Sigmoid colon (tissue), 7 donors: ENCODE measurements at regions of chr15 and their contacts with region 1.

Region 1: DNA sequence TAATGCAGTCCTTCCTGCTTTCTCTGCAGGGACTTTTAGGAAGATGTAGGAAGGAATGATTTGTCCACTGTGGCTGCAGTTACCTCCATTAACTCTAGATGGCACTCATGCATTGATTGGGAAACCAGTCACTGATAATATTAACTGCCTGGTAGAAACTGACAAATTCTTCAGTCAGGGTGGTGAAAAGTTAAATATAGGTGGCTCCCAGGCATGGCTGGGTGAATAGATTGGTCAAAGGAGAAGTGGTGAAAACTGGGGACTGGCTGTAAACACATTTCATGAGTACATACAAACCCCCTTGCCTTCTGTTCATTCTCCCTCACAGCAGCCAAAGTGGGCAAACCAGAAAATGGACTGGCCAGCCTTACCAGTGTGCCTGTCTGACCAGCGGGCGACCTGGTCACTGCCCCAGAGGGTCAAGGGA is 333.4 kb downstream of the THSD4 start:
- DNase-seq: no peak
- H3K4me3 ChIP-seq: no peak overlapping the region
- H3K27ac ChIP-seq: no peak overlapping the region
- H3K4me1 ChIP-seq: no peaks in the 10 kb centered on the region
- H3K27me3 ChIP-seq: no peaks in the 10 kb centered on the region
- CTCF ChIP-seq: peak; percentile 65 to 91 (median 86)
- EP300 ChIP-seq: no peak
- POLR2A ChIP-seq: no peak

Region 2: DNA sequence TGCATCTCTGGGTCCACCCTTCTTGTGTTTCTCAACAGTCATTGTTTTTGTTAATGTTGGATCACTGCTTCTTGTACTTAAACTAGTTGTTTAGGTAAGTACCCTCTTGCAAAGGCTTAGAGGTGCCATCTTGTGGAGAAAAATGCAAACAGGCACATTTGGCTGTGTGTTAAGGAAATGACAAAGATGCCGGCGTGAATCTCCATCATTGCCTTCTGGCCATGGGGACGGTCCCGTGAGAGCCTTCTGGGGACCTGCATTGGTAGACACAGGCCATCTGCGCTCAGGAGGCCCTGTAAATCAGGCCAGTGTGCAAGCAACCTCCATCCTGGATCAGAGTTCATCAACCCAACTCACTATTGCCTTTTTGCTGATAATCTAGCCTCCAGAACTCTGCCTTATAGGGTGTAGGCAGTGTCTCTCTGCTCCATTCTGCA is 203.1 kb after region 1 on chr15:
- intact Hi-C with region 1: loop called (anchors 5 kb)
- DNase-seq: no peak
- H3K4me3 ChIP-seq: no peak overlapping the region
- H3K27ac ChIP-seq: no peak overlapping the region
- H3K4me1 ChIP-seq: peaks cover 0 to 10% (median 0%) of the 10 kb centered on the region in 4 donors
- H3K27me3 ChIP-seq: no peaks in the 10 kb centered on the region
- CTCF ChIP-seq: peak in 2 of 4 experiments; percentile 24 to 35
- EP300 ChIP-seq: no peak
- POLR2A ChIP-seq: no peak

Region 3: DNA sequence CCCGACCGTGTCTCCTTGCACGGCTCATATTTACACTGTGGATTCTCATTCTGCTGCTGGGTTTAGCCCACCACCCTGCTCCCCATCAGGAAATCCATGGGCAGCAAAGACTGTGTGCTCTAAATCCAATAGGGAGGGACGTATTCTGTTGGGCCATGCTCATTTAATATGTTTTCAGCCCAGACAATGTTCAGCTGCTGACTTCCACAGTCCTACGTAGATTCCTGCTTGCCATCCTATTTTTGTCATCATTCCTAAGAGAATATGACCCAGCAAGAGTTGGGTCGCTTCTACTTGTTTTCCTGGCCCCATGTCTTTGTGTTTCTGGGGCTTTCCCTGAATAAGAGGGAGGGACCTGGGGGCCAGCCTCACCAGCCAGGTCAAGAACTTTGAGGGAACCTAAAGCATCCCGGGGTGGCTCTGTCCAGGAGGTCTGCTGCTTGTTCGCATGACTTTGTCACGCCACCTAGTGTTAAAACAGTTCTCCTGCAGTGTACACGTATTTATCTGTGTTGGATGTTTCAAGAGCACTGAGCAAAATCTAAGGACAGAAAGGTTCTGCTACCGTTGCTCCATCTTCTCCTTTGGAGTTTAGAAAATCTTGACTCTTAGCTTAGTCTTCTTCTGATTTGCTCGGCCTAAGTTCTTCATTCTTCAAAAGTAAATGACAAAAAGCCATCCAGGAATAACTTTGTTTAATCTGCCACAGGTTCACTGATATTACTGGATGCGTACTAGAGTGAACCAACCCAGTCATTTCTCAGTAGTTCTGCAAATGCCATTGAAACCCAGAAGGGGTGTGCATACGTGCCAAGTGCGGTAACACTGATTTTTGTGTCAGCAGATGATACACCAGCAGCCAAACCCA is 281.8 kb after region 1 on chr15:
- intact Hi-C with region 1: loop called (anchors 1 kb)
- DNase-seq: no peak
- H3K4me3 ChIP-seq: no peak overlapping the region
- H3K27ac ChIP-seq: no peak overlapping the region
- H3K4me1 ChIP-seq: peaks cover 0 to 4% (median 0%) of the 10 kb centered on the region in 4 donors
- H3K27me3 ChIP-seq: no peaks in the 10 kb centered on the region
- CTCF ChIP-seq: peak; percentile 15 to 72 (median 62)
- EP300 ChIP-seq: no peak
- POLR2A ChIP-seq: no peak

Region 4: DNA sequence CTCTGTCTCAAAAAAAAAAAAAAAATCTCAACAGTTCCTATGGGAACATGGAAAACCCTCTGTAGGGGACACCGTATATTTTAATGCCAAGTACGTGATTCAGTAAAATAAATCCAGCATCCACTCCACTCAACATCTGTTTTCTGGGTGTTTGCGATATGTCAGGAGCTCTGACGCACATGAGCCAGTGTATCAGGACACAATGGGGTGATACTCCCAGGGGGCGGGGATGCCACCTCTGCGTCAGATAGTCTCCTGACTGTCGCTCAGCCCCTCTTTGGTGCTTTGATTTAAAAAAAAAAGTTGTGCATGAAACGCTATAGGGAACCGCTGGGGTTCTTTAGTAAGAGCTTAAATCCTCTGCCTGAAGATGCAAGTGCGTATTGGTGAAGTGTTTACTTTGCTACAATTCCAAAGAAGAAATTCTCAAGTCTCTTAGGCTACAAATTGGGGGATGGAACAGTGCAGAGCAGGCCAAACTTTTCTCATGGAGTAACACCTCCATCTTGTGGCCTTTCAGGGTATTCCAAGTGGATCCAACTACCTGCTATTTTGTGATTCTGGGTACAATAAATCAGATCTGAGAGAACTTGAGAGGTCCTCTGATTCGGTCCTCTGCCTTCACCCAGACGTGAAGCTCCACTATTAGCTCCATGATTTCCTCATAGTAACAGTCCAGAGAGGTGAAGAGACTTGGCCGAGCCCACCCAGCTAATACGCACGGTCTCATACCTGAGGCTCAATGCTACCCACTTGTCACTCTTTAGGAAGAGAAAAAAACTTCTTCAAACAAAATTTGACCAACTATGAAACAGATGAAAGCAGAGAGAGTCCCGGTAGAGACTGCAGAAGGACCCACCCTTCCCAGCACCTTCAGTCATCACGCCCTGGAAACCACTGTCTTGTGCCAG is 352.4 kb after region 1 on chr15:
- intact Hi-C with region 1: loop called (anchors 5 kb)
- DNase-seq: no peak
- H3K4me3 ChIP-seq: no peak overlapping the region
- H3K27ac ChIP-seq: no peak overlapping the region
- H3K4me1 ChIP-seq: no peaks in the 10 kb centered on the region
- H3K27me3 ChIP-seq: peaks cover 0 to 9% (median 0%) of the 10 kb centered on the region in 3 donors
- CTCF ChIP-seq: peak; percentile 40 to 85 (median 75)
- EP300 ChIP-seq: no peak
- POLR2A ChIP-seq: no peak